ENCODE measurements at regions of chr4 and their contacts with region 1.

Region 1: GRCh38 chr4:147160908-147161513 is 215.3 kb upstream of the TTC29 start:
- DNase-seq: peak; percentile 5
- H3K4me3 ChIP-seq: no peak overlapping the region
- H3K27me3 ChIP-seq: no peaks in the 10 kb centered on the region
- CTCF ChIP-seq: peak; percentile 84

Region 2: GRCh38 chr4:147136310-147136709 is 24.7 kb before region 1 on chr4:
- CTCF ChIA-PET with region 1: no interaction called
- POLR2A ChIA-PET with region 1: no interaction called
- DNase-seq: no peak
- H3K4me3 ChIP-seq: no peak overlapping the region
- H3K27me3 ChIP-seq: no peaks in the 10 kb centered on the region
- CTCF ChIP-seq: no peak

Region 3: GRCh38 chr4:147173797-147174432 is 12.9 kb after region 1 on chr4:
- CTCF ChIA-PET with region 1: interaction called, 13 read pairs
- POLR2A ChIA-PET with region 1: no interaction called
- DNase-seq: no peak
- H3K4me3 ChIP-seq: no peak overlapping the region
- H3K27me3 ChIP-seq: no peaks in the 10 kb centered on the region
- CTCF ChIP-seq: no peak